Activated CD4-positive, alpha-beta T cell treated with anti-CD3 and anti-CD28 coated beads for 36 hours (primary cell): ENCODE measurements at regions of chr1 and their contacts with region 1.

Region 1: GRCh38 chr1:154335025-154335714 is 9.8 kb downstream of the ATP8B2 start:
- DNase-seq: peak; percentile 97
- ATAC-seq: peak; percentile 95
- H3K4me3 Mint-ChIP-seq: no peak overlapping the region
- H3K27ac Mint-ChIP-seq: peak overlapping the region; percentile 92
- H3K4me1 Mint-ChIP-seq: peaks cover 64% of the 10 kb centered on the region
- H3K27me3 Mint-ChIP-seq: no peaks in the 10 kb centered on the region

Region 2: DNA sequence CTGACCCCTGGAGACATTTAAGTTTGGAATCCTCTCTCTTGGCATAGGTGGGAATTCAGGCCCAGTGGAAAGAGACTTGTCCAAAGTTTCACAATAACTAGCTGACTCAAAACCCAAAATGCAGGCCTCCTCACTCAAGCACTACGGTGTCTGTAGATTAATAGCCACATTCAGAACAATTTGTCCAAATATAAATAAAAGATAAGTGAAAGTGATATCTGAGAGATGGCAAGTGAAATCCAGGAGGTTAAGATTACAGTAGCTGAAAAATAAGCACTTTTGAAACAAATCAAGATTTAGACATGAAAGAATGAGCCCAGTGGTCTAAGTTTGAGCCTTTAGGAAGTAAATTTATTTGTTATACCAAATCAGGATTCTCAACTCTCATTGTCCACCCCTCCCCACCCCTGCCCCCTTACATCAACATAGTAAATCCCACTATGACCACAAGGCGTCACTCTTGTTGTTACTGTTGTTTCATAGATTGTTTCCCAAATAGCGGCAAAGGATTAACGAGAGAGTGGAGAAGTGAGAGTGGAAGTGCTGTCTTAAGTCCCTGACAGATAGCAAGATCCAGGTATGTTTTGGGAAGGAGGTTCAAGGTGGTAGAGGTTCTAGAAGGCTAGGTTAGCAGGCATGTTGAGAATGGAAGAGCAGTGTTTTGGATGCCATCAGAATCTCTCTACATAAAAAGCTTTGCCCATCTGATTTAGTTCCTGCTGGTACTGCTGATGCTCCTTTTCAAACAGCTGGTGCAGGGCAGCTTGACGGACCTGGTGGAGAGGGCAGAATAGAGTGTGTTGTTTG is 136.2 kb before region 1 on chr1:
- CTCF ChIA-PET with region 1: interaction called, 17 read pairs
- POLR2A ChIA-PET with region 1: no interaction called
- intact Hi-C with region 1: no loop called
- DNase-seq: peak; percentile 62
- ATAC-seq: peak; percentile 77
- H3K4me3 Mint-ChIP-seq: no peak overlapping the region
- H3K27ac Mint-ChIP-seq: no peak overlapping the region
- H3K4me1 Mint-ChIP-seq: no peaks in the 10 kb centered on the region
- H3K27me3 Mint-ChIP-seq: peaks cover 3% of the 10 kb centered on the region

Region 3: GRCh38 chr1:154304664-154305337 is 30.4 kb before region 1 on chr1:
- CTCF ChIA-PET with region 1: interaction called, 18 read pairs
- POLR2A ChIA-PET with region 1: interaction called, 4 read pairs
- intact Hi-C with region 1: no loop called
- DNase-seq: peak; percentile 81
- ATAC-seq: peak; percentile 95
- H3K4me3 Mint-ChIP-seq: no peak overlapping the region
- H3K27ac Mint-ChIP-seq: peak overlapping the region; percentile 27
- H3K4me1 Mint-ChIP-seq: peaks cover 24% of the 10 kb centered on the region
- H3K27me3 Mint-ChIP-seq: no peaks in the 10 kb centered on the region

Region 4: GRCh38 chr1:154352581-154353459 is 17.6 kb after region 1 on chr1:
- CTCF ChIA-PET with region 1: interaction called, 163 read pairs
- POLR2A ChIA-PET with region 1: interaction called, 4 read pairs
- intact Hi-C with region 1: no loop called
- DNase-seq: peak; percentile 80
- ATAC-seq: peak; percentile 84
- H3K4me3 Mint-ChIP-seq: peak overlapping the region; percentile 72
- H3K27ac Mint-ChIP-seq: peak overlapping the region; percentile 81
- H3K4me1 Mint-ChIP-seq: peaks cover 32% of the 10 kb centered on the region
- H3K27me3 Mint-ChIP-seq: no peaks in the 10 kb centered on the region

Region 5: DNA sequence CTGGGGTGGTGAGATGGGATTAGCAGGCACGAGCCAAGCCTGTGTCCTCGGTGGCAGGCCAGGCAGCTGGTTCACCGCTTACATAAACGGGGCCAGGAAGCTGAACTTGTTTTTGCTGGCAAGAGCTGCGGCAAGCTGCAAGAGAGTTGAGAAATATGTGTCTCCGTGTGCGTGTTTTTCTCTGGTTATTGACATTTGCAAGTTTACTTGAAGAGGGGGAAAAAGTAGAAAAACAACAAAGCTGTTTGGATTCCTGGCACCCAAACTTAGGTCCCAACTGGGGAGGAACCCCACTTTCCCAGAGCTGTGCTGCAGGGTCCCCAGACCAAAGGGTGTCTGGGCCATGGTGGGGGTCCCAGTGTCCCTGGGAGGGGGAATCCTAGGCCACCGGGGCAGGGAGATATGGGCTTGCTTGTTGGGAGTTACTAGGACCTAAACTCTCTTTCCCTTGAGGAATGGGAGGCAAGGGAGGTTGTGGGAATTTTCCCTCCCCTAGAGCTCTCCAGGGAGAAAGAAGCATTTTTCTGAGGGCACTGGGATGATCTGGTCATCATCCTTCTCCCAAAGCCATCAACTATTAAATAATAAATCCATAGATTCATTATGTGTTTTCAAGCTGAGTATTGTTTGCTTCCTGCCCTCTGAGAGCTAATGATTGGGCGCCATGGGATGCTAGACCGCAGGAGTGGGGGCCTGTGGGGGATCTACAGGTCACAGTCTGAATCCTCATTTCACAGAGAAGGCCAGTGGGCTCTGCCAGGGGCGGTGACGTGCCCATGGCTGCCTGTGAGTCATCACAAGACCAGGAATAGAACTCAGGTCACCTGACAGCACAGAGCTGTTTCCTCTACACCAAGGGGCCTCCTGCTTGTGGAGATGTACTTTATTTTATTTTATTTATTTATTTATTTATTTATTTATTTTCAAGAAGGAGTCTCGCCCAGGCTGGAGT is 84.7 kb after region 1 on chr1:
- CTCF ChIA-PET with region 1: interaction called, 12 read pairs
- POLR2A ChIA-PET with region 1: interaction called, 3 read pairs
- intact Hi-C with region 1: no loop called
- DNase-seq: peak; percentile 80
- ATAC-seq: peak; percentile 78
- H3K4me3 Mint-ChIP-seq: peak overlapping the region; percentile 61
- H3K27ac Mint-ChIP-seq: peak overlapping the region; percentile 92
- H3K4me1 Mint-ChIP-seq: peaks cover 89% of the 10 kb centered on the region
- H3K27me3 Mint-ChIP-seq: no peaks in the 10 kb centered on the region

Region 6: DNA sequence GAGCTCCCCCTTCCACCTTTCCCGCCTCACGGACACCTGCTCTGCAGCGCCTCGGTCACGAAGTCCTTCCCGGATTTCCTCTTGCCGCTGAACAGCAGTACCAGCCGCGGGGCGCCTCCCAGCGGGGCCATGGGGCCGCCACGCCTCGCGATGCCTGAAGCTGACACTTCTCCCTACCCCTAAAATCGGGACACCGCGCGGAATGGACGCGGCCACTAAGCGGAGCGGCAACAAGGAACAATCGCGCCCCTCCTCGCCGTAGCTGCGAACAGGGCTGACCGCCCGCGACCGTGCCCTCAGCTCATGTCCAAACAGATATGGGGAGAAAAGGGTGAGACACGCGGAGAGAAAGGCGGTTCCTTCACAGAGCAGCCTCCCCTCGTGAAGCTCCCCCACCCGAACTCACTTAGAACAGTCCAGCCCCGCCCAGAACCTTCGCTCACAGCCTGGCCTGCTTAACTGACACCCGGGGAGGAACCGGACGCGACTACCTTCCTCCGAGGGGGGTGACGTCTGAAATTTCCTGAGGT is 601.5 kb after region 1 on chr1 and contains the start of gene PMVK:
- CTCF ChIA-PET with region 1: no interaction called
- POLR2A ChIA-PET with region 1: no interaction called
- intact Hi-C with region 1: no loop called
- DNase-seq: peak; percentile 97
- ATAC-seq: peak; percentile 80
- H3K4me3 Mint-ChIP-seq: peak within 1 kb of the TSS; percentile 95
- H3K27ac Mint-ChIP-seq: peak within 1 kb of the TSS; percentile 96
- H3K4me1 Mint-ChIP-seq: peaks cover 54% of the 10 kb centered on the region
- H3K27me3 Mint-ChIP-seq: no peaks in the 10 kb centered on the region
- total RNA-seq, gene PMVK: 17.0 to 36.9 TPM